ENCODE measurements at regions of chr6 and their contacts with region 1.

Region 1: DNA sequence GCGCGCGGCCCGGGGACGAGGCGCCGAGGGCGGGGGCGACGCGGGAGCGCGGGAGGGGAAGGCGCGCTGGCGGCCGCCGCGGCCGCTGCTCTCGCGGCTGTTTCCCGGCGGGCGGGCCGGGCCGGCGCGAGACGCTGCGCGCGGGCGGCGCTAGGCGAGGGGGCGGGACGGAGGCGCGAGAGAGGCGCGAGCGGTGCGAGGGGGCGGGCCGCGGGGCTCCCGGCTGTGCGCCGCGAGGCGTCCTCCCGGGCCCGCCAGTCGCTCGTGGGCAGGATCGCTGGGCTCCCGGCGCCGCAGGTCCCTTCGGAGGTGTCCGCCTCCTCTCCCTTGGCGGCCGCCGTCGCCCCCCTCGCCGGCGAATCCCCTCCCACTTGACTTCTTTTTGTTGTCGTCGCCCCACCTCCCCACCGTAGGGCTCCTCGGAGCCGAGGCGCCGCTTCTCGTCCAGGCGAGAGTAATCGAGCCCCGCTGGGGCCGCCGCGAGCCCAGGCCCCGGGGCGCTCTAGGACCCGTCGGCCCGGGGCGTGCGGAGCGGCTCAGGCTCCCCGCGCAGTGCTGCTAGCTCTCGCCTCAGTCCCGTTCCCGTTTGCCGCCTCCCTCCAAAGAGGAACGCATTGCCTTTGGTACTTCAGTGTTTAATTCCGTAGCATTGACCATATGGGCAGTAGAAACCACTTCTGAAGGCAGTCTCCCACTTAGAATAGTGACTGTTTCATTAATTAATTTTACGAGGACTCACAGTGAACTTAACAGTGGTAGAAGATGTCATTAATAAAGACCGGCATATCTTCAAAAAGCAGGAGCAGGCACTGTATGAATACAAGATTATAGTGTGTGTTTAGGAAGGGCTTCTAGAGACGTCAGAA is at the start of gene RANBP9:
- DNase-seq: peak; percentile 89 to 94 (median 90)
- ATAC-seq: peak; percentile 90 to 95 (median 94)
- H3K4me3 ChIP-seq: peak within 1 kb of the TSS; percentile 66 to 96 (median 86)
- H3K27ac ChIP-seq: peak within 1 kb of the TSS; percentile 83 to 99 (median 95)
- H3K4me1 ChIP-seq: peaks cover 0 to 46% (median 28%) of the 10 kb centered on the region in 12 donors
- H3K27me3 ChIP-seq: no peaks in the 10 kb centered on the region
- CTCF ChIP-seq: no peak
- POLR2A ChIP-seq: peak in 1 of 2 donors; percentile 76
- total RNA-seq, gene RANBP9: 25.8 to 43.7 (median 35.0) TPM

Region 2: DNA sequence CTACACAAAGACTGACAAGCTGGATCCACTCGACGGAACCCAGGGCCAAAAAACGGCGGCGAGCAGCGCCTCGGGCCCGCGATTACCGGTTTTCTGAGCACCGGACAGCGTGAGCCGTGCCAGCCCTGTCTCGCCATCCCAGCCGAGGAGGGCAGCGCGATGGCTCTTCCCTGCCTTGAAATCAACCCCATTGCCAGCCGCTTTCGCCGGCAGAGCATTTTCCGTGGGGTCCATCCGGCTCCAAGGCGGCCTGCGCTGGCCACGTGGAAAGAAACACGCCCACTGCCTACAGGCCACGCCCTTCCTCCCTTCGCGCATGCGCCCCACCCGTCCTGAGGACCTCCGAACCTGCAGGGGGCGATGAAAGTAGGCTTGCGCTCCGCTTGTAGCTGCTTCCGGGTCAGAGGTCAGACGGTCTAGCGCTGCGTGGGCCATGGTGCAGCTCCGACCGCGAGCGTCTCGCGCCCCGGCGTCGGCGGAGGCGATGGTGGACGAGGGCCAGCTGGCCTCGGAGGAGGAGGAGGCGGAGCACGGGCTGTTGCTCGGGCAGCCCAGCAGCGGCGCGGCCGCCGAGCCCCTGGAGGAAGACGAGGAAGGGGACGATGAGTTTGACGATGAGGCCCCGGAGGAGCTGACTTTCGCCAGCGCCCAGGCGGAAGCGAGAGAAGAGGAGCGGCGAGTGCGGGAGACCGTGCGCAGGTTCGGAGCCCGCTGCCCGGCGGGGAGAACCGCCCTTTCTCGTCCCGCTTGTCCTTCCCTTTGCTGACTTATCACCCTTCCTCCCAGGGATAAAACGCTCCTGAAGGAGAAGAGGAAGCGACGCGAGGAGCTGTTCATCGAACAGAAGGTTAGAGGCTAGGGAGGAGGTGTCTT is 96.8 kb before region 1 on chr6 and contains the start of gene NOL7:
- intact Hi-C with region 1: loop called in 7 of 10 experiments (anchors 1 to 10 kb)
- DNase-seq: peak; percentile 98 to 99 (median 98)
- ATAC-seq: peak; percentile 96 to 98 (median 96)
- H3K4me3 ChIP-seq: peak within 1 kb of the TSS; percentile 66 to 96 (median 83)
- H3K27ac ChIP-seq: peak within 1 kb of the TSS; percentile 75 to 94 (median 89)
- H3K4me1 ChIP-seq: peaks cover 3 to 48% (median 27%) of the 10 kb centered on the region in 12 donors
- H3K27me3 ChIP-seq: no peaks in the 10 kb centered on the region
- CTCF ChIP-seq: peak; percentile 83 to 99 (median 92)
- POLR2A ChIP-seq: peak in 1 of 2 donors; percentile 72
- total RNA-seq, gene NOL7: 38.6 to 118 (median 47.8) TPM

Region 3: DNA sequence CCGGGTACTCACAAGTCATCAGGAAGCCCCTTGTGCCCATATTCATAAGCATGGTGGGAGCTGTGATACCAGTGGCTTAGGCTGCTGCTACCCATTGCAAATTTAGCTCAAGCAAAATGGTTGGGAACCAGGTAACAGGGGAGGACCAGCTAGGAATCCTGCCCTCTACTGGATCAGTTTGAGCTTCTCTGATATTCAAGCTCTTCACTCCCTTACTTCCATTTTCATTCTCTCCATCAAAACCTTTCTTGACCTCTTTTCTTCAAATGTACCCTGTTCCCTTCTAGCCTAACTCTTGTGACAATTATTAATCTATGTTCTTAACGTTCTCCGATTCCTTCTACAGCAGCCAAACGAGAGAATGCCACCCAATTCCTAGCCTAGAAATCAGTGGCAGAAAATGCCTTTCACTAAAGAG is 87.1 kb before region 1 on chr6:
- intact Hi-C with region 1: loop called in 3 of 10 experiments (anchors 5 kb)
- DNase-seq: no peak
- ATAC-seq: peak in 3 of 4 donors; percentile 37 to 64 (median 48)
- H3K4me3 ChIP-seq: no peak overlapping the region
- H3K27ac ChIP-seq: no peak overlapping the region
- H3K4me1 ChIP-seq: no peaks in the 10 kb centered on the region
- H3K27me3 ChIP-seq: no peaks in the 10 kb centered on the region
- CTCF ChIP-seq: peak in 11 of 12 donors; percentile 10 to 49 (median 34)
- POLR2A ChIP-seq: no peak

Region 4: GRCh38 chr6:13630499-13630898 is 81.5 kb before region 1 on chr6:
- intact Hi-C with region 1: loop called in 2 of 10 experiments (anchors 5 kb)
- DNase-seq: no peak
- ATAC-seq: no peak
- H3K4me3 ChIP-seq: no peak overlapping the region
- H3K27ac ChIP-seq: no peak overlapping the region
- H3K4me1 ChIP-seq: peaks cover 0 to 8% (median 0%) of the 10 kb centered on the region in 12 donors
- H3K27me3 ChIP-seq: no peaks in the 10 kb centered on the region
- CTCF ChIP-seq: no peak
- POLR2A ChIP-seq: no peak

Region 5: DNA sequence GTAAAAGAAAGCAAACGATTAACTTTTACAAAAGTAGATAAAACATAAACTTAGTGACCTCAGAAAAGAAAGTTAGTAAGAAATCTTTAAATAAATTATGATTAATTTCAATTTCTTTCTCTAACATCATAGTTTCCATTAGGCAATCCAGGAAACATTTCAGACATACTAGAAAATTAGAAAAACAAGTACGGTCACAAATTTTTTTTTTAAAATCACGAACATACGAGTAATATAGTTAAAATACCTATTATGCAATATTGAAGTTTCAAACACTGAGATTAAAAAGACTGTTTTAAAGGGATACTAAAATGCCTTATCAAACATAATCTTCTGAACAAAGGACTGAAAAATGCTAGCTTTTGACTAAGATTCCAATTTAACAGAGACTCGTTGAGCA is 70.7 kb before region 1 on chr6:
- intact Hi-C with region 1: loop called in 1 of 10 experiments (anchors 10 kb)
- DNase-seq: no peak
- ATAC-seq: no peak
- H3K4me3 ChIP-seq: no peak overlapping the region
- H3K27ac ChIP-seq: no peak overlapping the region
- H3K4me1 ChIP-seq: peaks cover 0 to 9% (median 0%) of the 10 kb centered on the region in 12 donors
- H3K27me3 ChIP-seq: no peaks in the 10 kb centered on the region
- CTCF ChIP-seq: no peak
- POLR2A ChIP-seq: no peak

Region 6: GRCh38 chr6:13767121-13767808 is 55.3 kb after region 1 on chr6:
- intact Hi-C with region 1: loop called in 2 of 10 experiments (anchors 2 to 5 kb)
- DNase-seq: peak in 4 of 5 donors; percentile 63 to 72 (median 66)
- ATAC-seq: peak; percentile 83 to 96 (median 92)
- H3K4me3 ChIP-seq: peak overlapping the region in 10 of 12 donors; percentile 4 to 54 (median 44)
- H3K27ac ChIP-seq: peak overlapping the region in 10 of 12 donors; percentile 4 to 79 (median 43)
- H3K4me1 ChIP-seq: peaks cover 0 to 29% (median 13%) of the 10 kb centered on the region in 12 donors
- H3K27me3 ChIP-seq: no peaks in the 10 kb centered on the region
- CTCF ChIP-seq: peak in 7 of 12 donors; percentile 22 to 47 (median 30)
- POLR2A ChIP-seq: no peak

Region 7: DNA sequence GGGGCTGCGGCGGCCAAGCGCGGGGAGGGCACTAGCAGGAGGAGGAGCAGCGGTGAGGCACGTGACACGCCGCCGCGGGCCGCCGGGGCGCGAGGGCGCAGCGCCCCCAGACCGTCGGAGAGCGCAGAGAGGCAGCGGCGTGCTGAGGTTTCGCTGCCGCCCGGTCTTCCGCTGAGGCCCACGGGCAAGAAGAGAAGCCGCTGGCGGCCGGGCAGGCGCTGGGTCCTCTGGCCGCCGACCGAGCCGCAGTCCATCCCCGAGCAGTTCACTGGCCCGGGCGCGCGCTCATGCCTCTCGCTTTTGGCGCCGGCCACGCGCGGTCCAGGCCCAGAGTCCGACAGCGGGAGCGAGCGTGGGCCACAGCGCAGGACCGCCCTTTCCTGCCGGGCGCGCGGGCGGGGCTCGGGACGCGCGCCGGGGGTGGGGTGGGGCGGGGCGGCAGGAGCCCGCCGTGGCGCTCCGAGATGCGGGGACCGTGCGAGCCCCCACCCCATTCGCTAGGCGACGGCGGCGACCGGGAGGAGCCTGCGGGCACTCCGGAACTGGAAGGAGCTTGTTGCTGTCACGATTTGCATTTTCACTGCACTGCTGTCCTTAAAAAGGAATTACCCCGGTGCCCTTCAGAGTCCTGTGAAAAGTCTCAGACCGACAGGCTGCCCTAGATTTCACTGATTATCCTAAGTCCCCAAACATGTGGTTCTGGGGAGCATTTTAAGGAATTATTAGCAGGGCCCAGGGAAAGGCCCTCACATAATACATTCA is 102.4 kb after region 1 on chr6 and contains the start of gene MCUR1:
- intact Hi-C with region 1: loop called in 1 of 10 experiments (anchors 5 kb)
- DNase-seq: peak; percentile 88 to 94 (median 92)
- ATAC-seq: peak; percentile 89 to 96 (median 94)
- H3K4me3 ChIP-seq: peak within 1 kb of the TSS; percentile 67 to 97 (median 88)
- H3K27ac ChIP-seq: peak within 1 kb of the TSS; percentile 81 to 99 (median 97)
- H3K4me1 ChIP-seq: peaks cover 4 to 42% (median 34%) of the 10 kb centered on the region in 12 donors
- H3K27me3 ChIP-seq: no peaks in the 10 kb centered on the region
- CTCF ChIP-seq: peak in 6 of 12 donors; percentile 7 to 51 (median 38)
- POLR2A ChIP-seq: peak in 1 of 2 donors; percentile 72
- total RNA-seq, gene MCUR1: 16.3 to 32.1 (median 28.0) TPM

Measured in heart left ventricle (tissue), 16 donors.